ENCODE measurements at regions of chr15 and their contacts with region 1.

Region 1: GRCh38 chr15:49421991-49422390 is 1.1 kb upstream of the FGF7 start:
- DNase-seq: peak; percentile 26
- CTCF ChIP-seq: peak; percentile 61

Region 2: DNA sequence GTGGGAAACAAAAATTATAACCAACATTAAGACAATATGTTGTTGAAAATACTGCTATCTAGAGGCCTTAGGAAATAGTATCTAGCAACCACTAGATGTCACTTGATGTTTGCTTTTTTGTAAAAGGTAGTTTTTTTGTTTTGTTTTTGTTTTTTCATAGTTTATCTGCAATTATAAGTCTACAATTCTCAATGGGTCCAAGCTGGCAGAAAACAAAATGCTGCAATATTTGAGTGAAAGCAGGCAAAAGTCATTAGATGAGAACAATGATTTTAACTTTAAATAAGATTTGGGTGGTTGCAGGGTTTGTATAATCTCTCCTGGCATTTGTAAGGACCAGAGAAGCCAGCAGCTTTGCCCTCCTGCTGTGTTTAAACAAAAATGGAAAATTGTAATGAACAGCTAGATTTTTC is 1063.8 kb before region 1 on chr15:
- CTCF ChIA-PET with region 1: interaction called, 12 read pairs
- POLR2A ChIA-PET with region 1: no interaction called
- DNase-seq: peak; percentile 35
- CTCF ChIP-seq: peak; percentile 60

Region 3: GRCh38 chr15:48855501-48856440 is 566.2 kb before region 1 on chr15:
- CTCF ChIA-PET with region 1: interaction called, 60 read pairs
- POLR2A ChIA-PET with region 1: no interaction called
- DNase-seq: no peak
- CTCF ChIP-seq: peak; percentile 2

Region 4: DNA sequence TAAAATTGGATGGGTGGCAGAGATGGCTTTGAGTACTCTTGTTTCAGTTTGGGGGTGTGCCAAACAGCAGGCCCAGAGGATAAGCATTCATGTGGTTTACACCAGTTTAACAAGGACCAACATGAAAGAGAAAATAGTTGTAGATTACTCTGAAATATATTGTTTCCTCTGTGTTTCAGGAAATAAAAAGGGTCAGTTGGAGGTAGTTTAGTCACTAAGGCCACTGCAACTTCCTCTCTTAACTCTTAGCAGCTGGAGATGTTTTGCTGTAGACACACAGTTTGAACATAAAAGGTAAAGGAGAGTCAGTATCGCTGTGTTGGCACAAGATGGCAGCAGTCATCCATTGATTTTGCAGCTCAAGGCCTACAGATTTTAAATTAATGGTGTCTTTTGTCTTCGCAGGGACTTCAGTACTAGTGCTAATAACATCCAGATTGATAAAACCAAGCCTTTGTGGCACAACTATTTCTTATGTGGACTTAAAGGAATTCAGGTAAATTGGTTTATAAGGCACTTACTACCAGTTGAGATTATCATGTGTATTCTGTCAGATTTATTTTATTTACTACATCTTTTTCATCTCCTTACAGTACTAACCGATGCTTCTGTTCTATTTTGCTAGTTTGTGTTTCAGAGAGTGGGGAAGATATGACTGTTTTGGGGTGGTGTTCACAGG is 186.4 kb before region 1 on chr15:
- CTCF ChIA-PET with region 1: interaction called, 98 read pairs
- POLR2A ChIA-PET with region 1: no interaction called
- DNase-seq: peak; percentile 37
- CTCF ChIP-seq: peak; percentile 72

Region 5: DNA sequence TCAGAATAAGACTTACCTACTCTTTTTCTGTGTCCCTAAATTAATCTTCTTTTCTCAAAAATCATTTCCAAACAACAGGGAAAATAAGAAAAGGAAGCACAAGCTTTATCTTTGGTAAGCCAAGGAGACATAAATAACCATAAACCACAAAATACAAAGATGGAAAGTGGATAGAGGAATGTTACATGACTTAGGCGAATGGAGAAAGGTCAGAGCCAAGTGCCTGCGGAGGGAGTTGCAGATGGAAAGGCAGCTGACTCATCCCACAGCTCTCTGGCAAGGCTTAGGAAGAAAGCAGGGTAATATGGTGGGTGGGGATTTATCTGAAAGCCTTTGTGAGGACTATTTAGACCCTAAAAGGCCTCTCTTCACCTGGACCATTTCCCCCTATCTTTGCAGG is 179.2 kb before region 1 on chr15:
- CTCF ChIA-PET with region 1: interaction called, 98 read pairs
- POLR2A ChIA-PET with region 1: no interaction called
- DNase-seq: no peak
- CTCF ChIP-seq: no peak

Region 6: GRCh38 chr15:49863431-49864205 is 441.6 kb after region 1 on chr15:
- CTCF ChIA-PET with region 1: no interaction called
- POLR2A ChIA-PET with region 1: no interaction called
- DNase-seq: no peak
- CTCF ChIP-seq: no peak

Measured in GM10248 (cell line).